ENCODE measurements at regions of chr1 and their contacts with region 1.

Region 1: GRCh38 chr1:154479764-154480421 is 22.1 kb upstream of the TDRD10 start:
- DNase-seq: peak; percentile 92
- H3K4me3 Mint-ChIP-seq: no peak overlapping the region
- H3K27ac Mint-ChIP-seq: no peak overlapping the region
- H3K4me1 Mint-ChIP-seq: peaks cover 23% of the 10 kb centered on the region
- H3K27me3 Mint-ChIP-seq: no peaks in the 10 kb centered on the region
- CTCF ChIP-seq: peak; percentile 98

Region 2: GRCh38 chr1:154324669-154325582 is 155.0 kb before region 1 on chr1 and contains the start of gene ATP8B2:
- CTCF ChIA-PET with region 1: interaction called, 5 read pairs
- POLR2A ChIA-PET with region 1: no interaction called
- intact Hi-C with region 1: loop called (anchors 1 kb)
- DNase-seq: peak; percentile 85
- H3K4me3 Mint-ChIP-seq: peak within 1 kb of the TSS; percentile 76
- H3K27ac Mint-ChIP-seq: peak within 1 kb of the TSS; percentile 77
- H3K4me1 Mint-ChIP-seq: peaks cover 31% of the 10 kb centered on the region
- H3K27me3 Mint-ChIP-seq: no peaks in the 10 kb centered on the region
- CTCF ChIP-seq: peak; percentile 99
- total RNA-seq, gene ATP8B2: 27.1 and 66.3 TPM in 2 replicates

Region 3: DNA sequence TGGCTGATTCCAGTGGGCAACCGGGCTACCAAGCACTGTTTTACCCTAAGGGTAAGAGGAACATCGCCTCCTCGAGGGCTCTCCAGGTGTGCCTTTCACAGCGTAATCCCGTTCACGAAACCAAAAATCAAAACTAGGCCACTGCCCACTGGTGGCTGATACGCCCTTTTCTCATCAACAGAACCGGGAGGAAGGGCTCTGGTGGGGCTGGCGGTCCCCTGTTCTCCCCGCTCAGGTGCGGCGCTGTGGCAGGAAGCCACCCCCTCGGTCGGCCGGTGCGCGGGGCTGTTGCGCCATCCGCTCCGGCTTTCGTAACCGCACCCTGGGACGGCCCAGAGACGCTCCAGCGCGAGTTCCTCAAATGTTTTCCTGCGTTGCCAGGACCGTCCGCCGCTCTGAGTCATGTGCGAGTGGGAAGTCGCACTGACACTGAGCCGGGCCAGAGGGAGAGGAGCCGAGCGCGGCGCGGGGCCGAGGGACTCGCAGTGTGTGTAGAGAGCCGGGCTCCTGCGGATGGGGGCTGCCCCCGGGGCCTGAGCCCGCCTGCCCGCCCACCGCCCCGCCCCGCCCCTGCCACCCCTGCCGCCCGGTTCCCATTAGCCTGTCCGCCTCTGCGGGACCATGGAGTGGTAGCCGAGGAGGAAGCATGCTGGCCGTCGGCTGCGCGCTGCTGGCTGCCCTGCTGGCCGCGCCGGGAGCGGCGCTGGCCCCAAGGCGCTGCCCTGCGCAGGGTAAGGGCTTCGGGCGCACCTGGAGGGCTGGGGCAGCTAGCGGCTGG is 74.7 kb before region 1 on chr1 and contains the start of gene IL6R:
- CTCF ChIA-PET with region 1: interaction called, 3 read pairs
- POLR2A ChIA-PET with region 1: interaction called, 5 read pairs
- intact Hi-C with region 1: loop called (anchors 1 kb)
- DNase-seq: peak; percentile 99
- H3K4me3 Mint-ChIP-seq: peak within 1 kb of the TSS; percentile 99
- H3K27ac Mint-ChIP-seq: peak within 1 kb of the TSS; percentile 96
- H3K4me1 Mint-ChIP-seq: peaks cover 37% of the 10 kb centered on the region
- H3K27me3 Mint-ChIP-seq: no peaks in the 10 kb centered on the region
- CTCF ChIP-seq: peak; percentile 38
- total RNA-seq, gene IL6R: 22.8 and 41.0 TPM in 2 replicates

Region 4: GRCh38 chr1:154493276-154493675 is 13.4 kb after region 1 on chr1:
- CTCF ChIA-PET with region 1: interaction called, 12 read pairs
- POLR2A ChIA-PET with region 1: interaction called, 3 read pairs
- intact Hi-C with region 1: no loop called
- DNase-seq: no peak
- H3K4me3 Mint-ChIP-seq: no peak overlapping the region
- H3K27ac Mint-ChIP-seq: no peak overlapping the region
- H3K4me1 Mint-ChIP-seq: no peaks in the 10 kb centered on the region
- H3K27me3 Mint-ChIP-seq: peaks cover 27% of the 10 kb centered on the region
- CTCF ChIP-seq: no peak

Region 5: GRCh38 chr1:154541231-154541630 is 61.3 kb after region 1 on chr1:
- CTCF ChIA-PET with region 1: interaction called, 128 read pairs
- POLR2A ChIA-PET with region 1: interaction called, 22 read pairs
- intact Hi-C with region 1: loop called (anchors 1 kb)
- DNase-seq: no peak
- H3K4me3 Mint-ChIP-seq: no peak overlapping the region
- H3K27ac Mint-ChIP-seq: no peak overlapping the region
- H3K4me1 Mint-ChIP-seq: no peaks in the 10 kb centered on the region
- H3K27me3 Mint-ChIP-seq: peaks cover 68% of the 10 kb centered on the region
- CTCF ChIP-seq: no peak

Region 6: DNA sequence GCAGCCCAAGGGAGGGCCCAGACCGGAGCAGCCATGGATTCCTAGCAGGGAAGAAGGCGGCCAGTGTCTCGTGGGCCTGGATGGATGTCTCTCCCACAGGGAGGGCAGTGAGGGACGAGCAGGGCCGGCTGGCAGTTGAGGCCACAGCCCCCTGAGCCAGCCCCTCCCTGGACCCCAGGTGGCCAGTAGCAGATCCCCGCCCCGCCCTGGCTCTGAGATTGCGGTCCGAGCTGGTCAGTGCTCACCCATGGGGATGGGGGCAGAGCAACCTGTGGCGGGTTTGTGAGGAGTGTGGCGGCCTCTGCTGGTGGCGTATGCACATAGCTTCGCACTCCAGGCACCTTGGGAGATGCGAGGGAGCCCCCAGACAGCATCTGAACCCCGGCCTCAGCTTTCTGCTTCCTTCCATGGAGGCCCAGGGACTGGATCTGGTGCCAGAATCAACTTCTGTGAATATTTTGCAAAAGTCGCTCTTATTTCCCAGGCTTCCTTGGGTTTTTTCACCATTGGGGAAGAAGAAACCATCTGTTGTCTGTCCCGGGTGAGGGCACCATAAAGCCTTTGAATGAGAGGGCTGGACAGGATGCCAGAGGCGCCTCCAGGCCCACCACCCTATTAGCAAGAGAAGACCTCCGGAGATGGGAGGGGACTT is 398.6 kb after region 1 on chr1:
- CTCF ChIA-PET with region 1: interaction called, 13 read pairs
- POLR2A ChIA-PET with region 1: interaction called, 3 read pairs
- intact Hi-C with region 1: loop called (anchors 1 kb)
- DNase-seq: peak; percentile 81
- H3K4me3 Mint-ChIP-seq: no peak overlapping the region
- H3K27ac Mint-ChIP-seq: no peak overlapping the region
- H3K4me1 Mint-ChIP-seq: peaks cover 14% of the 10 kb centered on the region
- H3K27me3 Mint-ChIP-seq: no peaks in the 10 kb centered on the region
- CTCF ChIP-seq: peak; percentile 97

Measured in MCF 10A (cell line).